K562 (cell line): ENCODE measurements at regions of chr2 and their contacts with region 1.

Region 1: GRCh38 chr2:201451292-201452057 is at the starts of genes STRADB and TRAK2:
- DNase-seq: peak; percentile 85 to 94 (median 88)
- ATAC-seq: peak; percentile 98
- H3K4me3 ChIP-seq: peak within 1 kb of the TSS; percentile 98
- H3K27ac ChIP-seq: peak within 1 kb of the TSS; percentile 72
- H3K4me1 ChIP-seq: peaks cover 10 to 12% of the 10 kb centered on the region in 2 experiments; a peak in 3 of 5 replicates
- H3K27me3 ChIP-seq: no peaks in the 10 kb centered on the region
- CTCF ChIP-seq: 0 out of 6 replicates have a peak, but pooled peaks of 1 of the 3 experiments have one; percentile 23
- EP300 ChIP-seq: no peak
- POLR2A ChIP-seq: peak; percentile 85
- RAD21 ChIP-seq: peak in 1 of 2 experiments; percentile 10; a peak in 1 of 4 replicates
- polyA plus RNA-seq, gene STRADB: 6.9 to 9.1 TPM
- polyA plus RNA-seq, gene TRAK2: 3.4 to 5.6 TPM

Region 2: GRCh38 chr2:201406077-201406662 is 45.3 kb before region 1 on chr2:
- CTCF ChIA-PET with region 1: no interaction called
- POLR2A ChIA-PET with region 1: interaction called, 3 read pairs
- in situ Hi-C with region 1: no loop called
- intact Hi-C with region 1: loop called (anchors 5 kb)
- DNase-seq: peak; percentile 9 to 57 (median 18)
- ATAC-seq: peak; percentile 15
- H3K4me3 ChIP-seq: peak overlapping the region; percentile 37; the same call in 1 of the 2 replicates
- H3K27ac ChIP-seq: peak overlapping the region; percentile 75; the same call in 2 of the 3 replicates
- H3K4me1 ChIP-seq: peaks cover 11 to 18% of the 10 kb centered on the region in 2 experiments; a peak in 4 of 5 replicates
- H3K27me3 ChIP-seq: no peaks in the 10 kb centered on the region
- CTCF ChIP-seq: no peak
- EP300 ChIP-seq: peak; percentile 90
- POLR2A ChIP-seq: no peak
- RAD21 ChIP-seq: no peak

Region 3: GRCh38 chr2:201419057-201419635 is 32.3 kb before region 1 on chr2:
- CTCF ChIA-PET with region 1: no interaction called
- POLR2A ChIA-PET with region 1: no interaction called
- in situ Hi-C with region 1: no loop called
- intact Hi-C with region 1: loop called (anchors 1 kb)
- DNase-seq: peak in 1 of 4 experiments; percentile 24
- ATAC-seq: peak; percentile 67; the same call in 2 of the 3 replicates
- H3K4me3 ChIP-seq: no peak overlapping the region
- H3K27ac ChIP-seq: no peak overlapping the region
- H3K4me1 ChIP-seq: peaks cover 0 to 1% of the 10 kb centered on the region in 2 experiments; a peak in 2 of 5 replicates
- H3K27me3 ChIP-seq: no peaks in the 10 kb centered on the region
- CTCF ChIP-seq: peak in 2 of 3 experiments; percentile 22 to 53; a peak in 3 of 6 replicates
- EP300 ChIP-seq: no peak
- POLR2A ChIP-seq: no peak
- RAD21 ChIP-seq: peak; percentile 28 to 55

Region 4: DNA sequence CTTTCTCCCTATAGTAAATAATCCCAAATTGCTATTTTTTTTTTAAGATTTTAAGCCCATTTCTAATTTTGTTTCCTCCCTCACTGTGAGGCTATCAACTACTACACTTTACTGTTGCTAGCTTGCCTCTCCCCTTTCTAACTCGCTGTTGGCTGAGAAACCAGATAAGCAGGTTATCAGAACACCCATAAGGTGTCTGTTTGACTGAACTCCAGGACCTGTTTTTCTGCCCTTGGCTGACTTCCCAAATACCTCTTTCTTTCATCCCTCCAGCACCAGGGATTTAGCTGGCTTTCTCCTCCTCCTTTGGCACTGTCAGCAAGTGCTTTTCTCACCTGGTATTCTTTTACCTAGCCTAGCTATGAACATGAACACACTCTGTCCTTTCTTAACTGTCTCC is 11.3 kb before region 1 on chr2:
- CTCF ChIA-PET with region 1: no interaction called
- POLR2A ChIA-PET with region 1: interaction called, 17 read pairs
- in situ Hi-C with region 1: no loop called
- intact Hi-C with region 1: no loop called
- DNase-seq: peak; percentile 69 to 87 (median 76)
- ATAC-seq: peak; percentile 93
- H3K4me3 ChIP-seq: no peak overlapping the region
- H3K27ac ChIP-seq: no peak overlapping the region
- H3K4me1 ChIP-seq: peaks cover 5 to 20% of the 10 kb centered on the region in 2 experiments; a peak in 4 of 5 replicates
- H3K27me3 ChIP-seq: no peaks in the 10 kb centered on the region
- CTCF ChIP-seq: no peak
- EP300 ChIP-seq: peak; percentile 97
- POLR2A ChIP-seq: no peak
- RAD21 ChIP-seq: no peak

Region 5: GRCh38 chr2:201572846-201573508 is 121.5 kb after region 1 on chr2:
- CTCF ChIA-PET with region 1: no interaction called
- POLR2A ChIA-PET with region 1: no interaction called
- in situ Hi-C with region 1: no loop called
- intact Hi-C with region 1: no loop called
- DNase-seq: no peak
- ATAC-seq: no peak
- H3K4me3 ChIP-seq: no peak overlapping the region
- H3K27ac ChIP-seq: no peak overlapping the region
- H3K4me1 ChIP-seq: no peaks in the 10 kb centered on the region
- H3K27me3 ChIP-seq: no peaks in the 10 kb centered on the region
- CTCF ChIP-seq: no peak
- EP300 ChIP-seq: no peak
- POLR2A ChIP-seq: no peak
- RAD21 ChIP-seq: no peak